Left cardiac atrium (tissue), 4 donors: ENCODE measurements at regions of chr11 and their contacts with region 1.

Region 1: DNA sequence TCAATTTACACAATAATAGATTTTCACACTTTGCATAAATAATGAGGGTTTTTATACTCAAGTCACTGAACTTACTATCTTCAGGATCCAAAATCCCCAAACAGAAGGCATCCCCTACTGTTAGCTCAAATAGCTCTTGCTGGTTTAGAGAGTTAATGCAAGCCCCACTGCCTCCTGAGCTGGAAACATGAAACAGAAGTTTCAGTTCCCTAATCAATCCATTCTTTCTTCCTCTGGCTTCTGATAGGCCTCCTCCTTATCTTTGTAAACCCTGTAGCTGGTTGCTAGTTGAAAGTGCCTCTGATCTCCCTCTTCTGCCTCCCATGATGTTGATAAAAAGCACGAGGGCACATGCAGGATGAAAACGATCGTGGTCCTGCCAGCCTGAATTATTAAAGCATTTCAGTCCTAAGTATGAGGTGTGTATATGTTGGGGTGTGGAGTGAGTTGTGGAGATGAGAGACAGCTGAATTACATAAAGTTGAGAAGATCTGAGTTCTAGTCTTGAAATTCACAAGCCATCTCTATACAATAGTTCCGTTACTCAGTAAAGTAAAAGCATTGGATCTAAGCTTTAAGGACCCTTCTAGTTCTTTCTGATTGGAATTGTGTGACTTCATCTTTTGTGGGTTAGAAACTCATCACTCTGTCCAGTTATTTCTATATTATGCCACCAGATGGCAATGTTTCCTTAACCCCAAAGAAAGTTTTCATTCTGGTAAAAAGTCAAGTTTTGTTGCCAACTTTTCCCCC is 35.0 kb upstream of the EHF start:
- DNase-seq: no peak
- ATAC-seq: peak; percentile 45 to 50

Region 2: DNA sequence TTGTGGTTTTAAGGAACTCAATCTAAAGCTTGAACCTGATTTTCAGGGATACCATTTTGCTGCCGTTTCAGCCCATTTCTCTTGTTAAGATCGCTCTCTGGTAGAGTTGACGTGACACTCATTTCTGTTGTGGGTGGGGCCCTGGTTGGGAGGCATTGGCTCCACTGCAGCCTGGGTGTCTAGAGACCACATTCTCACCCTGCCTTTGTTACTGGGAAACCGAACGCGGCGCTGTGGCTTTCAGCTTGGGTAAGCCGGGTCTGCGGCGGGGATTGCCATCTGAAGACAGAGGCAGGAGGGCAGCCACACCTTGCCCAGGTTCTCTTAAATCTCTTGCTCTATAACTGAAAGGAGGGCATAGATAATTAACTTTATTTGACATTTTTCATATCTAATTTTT is 38.2 kb after region 1 on chr11:
- intact Hi-C with region 1: no loop called
- DNase-seq: no peak
- ATAC-seq: no peak

Region 3: DNA sequence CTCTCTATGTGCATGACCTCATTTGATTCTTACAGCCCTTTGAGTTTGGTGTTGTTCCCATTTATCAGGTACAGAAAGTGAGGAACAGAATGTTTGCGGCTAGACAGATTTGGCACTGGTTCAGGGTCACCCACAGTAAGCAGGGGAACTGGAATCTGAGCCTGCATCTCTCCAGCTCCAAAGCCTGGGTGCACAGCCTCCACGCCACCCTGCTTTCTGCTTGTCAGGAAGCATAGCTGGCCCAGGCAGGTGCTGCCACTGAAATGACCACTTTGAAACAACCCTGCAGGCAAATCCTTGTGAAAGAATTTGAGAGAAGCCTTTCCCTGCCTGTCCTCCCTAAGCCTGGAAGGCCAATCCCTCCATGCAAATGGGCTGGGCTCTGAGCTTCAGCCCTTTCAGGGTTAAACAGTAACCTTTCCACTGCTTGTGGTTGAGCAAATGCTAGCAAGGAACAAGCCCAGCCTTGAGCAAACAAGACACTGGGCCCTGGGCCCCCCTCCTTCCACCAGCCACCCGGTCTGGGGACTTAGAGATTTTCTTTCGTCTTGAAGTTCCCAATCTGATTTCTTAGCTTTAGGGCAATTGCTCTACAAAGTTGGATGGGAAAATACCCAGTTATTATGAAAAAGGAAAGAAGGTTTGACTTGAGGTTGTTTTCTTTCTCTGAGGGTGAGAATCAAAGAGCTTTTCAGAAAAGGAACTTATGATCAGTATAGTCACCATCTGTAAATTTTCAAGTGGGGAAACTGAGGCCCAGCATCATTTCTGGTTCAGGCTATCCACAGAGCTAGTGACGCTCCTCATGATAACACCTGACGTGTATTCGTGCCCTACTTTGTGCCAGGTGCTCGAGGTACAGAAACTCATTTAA is 54.4 kb after region 1 on chr11:
- intact Hi-C with region 1: no loop called
- DNase-seq: no peak
- ATAC-seq: peak in 1 of 2 donors; percentile 72

Region 4: GRCh38 chr11:34890812-34891211 is 304.9 kb after region 1 on chr11:
- intact Hi-C with region 1: loop called (anchors 1 to 5 kb)
- DNase-seq: no peak
- ATAC-seq: no peak